Activated CD8-positive, alpha-beta T cell treated with anti-CD3 and anti-CD28 coated beads, Interleukin-2, amount 10 ng/mL, durations not matched to agents 7 days and 5 days (primary cell): ENCODE measurements at regions of chr11 and their contacts with region 1.

Region 1: DNA sequence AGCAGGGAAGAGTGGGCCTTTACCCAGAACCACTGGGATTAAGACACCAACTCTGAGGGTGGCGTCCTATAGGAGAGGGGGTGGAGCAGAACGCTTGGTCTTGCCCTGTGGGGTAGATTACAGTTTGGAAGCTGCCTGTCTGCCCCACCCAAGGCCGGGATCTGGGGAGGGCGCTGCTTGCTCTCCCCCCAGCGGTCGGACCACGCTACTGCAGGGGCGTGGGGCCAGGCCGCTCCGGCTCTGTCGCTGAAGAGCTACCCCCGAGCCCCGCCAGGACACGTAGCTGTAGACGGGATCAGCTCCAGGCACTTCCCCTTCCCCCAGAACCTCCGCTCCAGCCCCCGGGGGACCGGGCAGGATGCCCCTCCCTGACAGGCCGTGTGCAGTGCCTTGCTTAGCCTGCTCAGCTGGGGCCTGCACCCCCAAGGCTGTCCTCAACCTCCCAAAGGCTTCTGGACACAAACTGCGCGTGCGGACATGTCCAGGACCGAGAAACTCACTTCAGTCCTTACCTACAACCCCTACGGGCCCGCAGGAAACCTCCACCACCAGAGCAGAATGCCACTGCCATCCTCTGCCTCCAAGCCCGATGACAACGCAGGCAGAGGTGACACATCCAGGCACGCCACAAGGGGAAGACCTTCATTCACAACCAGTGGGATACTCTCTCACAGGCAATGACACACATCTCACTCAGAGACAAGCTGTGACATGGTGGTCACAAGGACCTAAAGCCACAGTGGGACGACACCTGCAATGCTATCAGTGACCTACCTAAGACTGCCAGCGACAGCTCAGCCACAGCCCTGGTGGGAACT is 3.6 kb downstream of the AHNAK start:
- DNase-seq: peak; percentile 81
- ATAC-seq: peak; percentile 36
- H3K4me3 Mint-ChIP-seq: peak overlapping the region; percentile 90
- H3K27ac Mint-ChIP-seq: peak overlapping the region; percentile 84
- H3K4me1 Mint-ChIP-seq: peaks cover 78% of the 10 kb centered on the region
- H3K27me3 Mint-ChIP-seq: peaks cover 7% of the 10 kb centered on the region

Region 2: GRCh38 chr11:62400760-62401159 is 142.2 kb before region 1 on chr11:
- CTCF ChIA-PET with region 1: interaction called, 69 read pairs
- POLR2A ChIA-PET with region 1: interaction called, 3 read pairs
- DNase-seq: no peak
- ATAC-seq: no peak
- H3K4me3 Mint-ChIP-seq: no peak overlapping the region
- H3K27ac Mint-ChIP-seq: no peak overlapping the region
- H3K4me1 Mint-ChIP-seq: peaks cover 51% of the 10 kb centered on the region
- H3K27me3 Mint-ChIP-seq: peaks cover 2% of the 10 kb centered on the region

Region 3: DNA sequence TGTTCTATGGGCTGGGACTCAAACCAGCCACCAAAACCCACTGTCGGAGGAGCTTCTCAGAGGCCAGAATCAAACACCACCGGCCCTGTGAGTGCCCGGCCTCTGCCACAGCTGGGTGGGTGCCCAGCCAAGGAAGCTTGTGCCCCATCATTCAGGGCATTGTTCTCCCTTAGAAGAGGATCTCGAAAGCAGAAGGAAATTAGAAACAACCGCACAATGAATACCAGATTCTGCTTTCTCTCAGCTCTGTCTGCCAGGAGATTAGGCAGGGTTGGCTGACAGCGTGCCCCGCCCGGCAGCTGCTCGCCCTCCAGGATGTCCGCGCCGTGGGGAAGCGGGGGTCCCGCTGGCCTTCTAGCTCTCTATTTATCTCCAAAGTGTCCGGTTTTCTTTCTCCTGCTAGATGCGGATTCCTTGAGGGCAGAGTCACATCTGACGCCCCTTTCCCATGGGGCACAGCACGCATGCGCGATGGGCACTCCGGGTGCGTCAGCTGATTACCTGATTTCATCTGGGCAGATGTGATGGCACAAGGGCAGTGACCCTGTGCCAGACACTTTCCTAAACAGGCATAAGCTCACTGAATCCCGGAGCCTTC is 98.6 kb before region 1 on chr11:
- CTCF ChIA-PET with region 1: interaction called, 15 read pairs
- POLR2A ChIA-PET with region 1: no interaction called
- DNase-seq: peak; percentile 32
- ATAC-seq: peak; percentile 42
- H3K4me3 Mint-ChIP-seq: peak overlapping the region; percentile 64
- H3K27ac Mint-ChIP-seq: no peak overlapping the region
- H3K4me1 Mint-ChIP-seq: peaks cover 3% of the 10 kb centered on the region
- H3K27me3 Mint-ChIP-seq: peaks cover 30% of the 10 kb centered on the region

Region 4: DNA sequence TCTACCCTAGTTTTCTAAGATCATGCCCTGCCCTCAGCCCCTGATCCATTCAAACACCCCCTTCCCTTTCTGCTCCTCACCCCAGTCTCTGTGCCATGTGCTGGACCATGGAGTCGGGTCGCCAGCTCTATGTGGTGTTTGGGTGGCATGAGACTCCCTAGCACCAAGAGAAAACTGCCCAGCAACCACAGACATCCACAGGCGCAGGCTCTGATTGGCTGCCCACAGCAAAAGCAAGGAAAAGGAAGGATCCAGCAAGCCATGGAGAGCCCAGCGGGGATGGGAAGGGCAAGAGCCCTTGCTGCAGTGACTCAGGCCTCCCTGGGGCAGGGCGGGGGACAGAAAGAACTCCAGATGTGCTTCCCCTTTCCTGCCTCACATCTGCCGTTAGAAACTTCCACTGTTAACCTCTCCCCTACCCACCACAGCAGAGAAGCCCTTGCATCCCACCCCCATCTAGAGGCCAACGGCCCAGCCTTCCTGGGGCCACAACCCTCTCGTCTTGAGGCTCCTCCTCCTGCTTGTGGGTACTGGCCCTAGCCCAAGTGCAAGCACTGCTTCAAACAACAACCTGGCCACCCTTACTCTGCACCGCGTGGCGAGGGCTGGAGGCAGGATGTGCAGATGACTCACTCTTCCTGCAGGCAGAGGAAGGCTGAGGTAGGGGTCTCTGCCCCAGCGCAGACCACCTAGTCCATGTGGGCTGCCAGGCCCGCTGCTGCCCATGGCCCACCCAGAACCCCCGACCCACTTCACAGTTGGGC is 13.3 kb after region 1 on chr11:
- CTCF ChIA-PET with region 1: interaction called, 266 read pairs
- POLR2A ChIA-PET with region 1: interaction called, 36 read pairs
- DNase-seq: peak; percentile 94
- ATAC-seq: peak; percentile 72
- H3K4me3 Mint-ChIP-seq: peak overlapping the region; percentile 66
- H3K27ac Mint-ChIP-seq: peak overlapping the region; percentile 95
- H3K4me1 Mint-ChIP-seq: peaks cover 95% of the 10 kb centered on the region
- H3K27me3 Mint-ChIP-seq: no peaks in the 10 kb centered on the region

Region 5: DNA sequence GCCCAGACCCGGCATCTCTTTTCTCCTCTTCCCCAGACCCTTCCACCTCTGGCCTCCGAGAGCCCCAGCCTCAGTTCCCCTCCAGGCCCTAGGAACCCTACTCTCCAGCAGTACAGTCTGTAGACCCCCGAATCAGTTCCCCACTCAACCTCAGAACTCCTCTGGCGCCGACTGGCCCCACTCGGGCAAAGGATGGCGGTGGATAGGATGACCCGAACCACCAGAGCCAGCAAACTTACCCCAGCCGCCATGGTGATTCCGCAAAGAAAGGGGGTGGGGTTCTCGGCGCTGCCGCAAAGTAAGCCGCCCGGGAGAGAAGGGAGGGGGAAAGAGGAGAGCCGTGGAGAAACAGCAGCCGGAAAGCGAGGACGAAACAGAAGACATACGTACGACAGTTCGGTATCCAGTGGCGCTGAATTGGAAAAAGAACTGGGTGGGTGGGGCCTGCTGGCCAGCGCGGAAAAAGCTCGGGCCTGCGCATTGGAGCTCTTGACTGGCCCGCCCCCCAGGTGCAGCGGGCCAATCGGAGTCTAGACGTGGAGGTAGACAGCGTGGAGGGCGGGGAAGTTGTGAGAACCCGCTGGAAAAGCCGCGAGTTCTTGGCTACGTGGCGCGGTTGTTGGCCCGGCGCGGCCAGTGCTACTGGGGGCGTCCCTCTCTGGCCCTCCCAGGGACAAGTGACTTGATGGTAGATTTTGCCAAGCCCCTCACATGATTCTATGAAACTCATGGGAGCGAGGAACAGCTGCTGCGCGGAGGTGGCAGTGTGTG is 30.8 kb after region 1 on chr11 and contains the start of gene EEF1G:
- CTCF ChIA-PET with region 1: interaction called, 49 read pairs
- POLR2A ChIA-PET with region 1: interaction called, 4 read pairs
- DNase-seq: peak; percentile 100
- ATAC-seq: peak; percentile 96
- H3K4me3 Mint-ChIP-seq: peak within 1 kb of the TSS; percentile 99
- H3K27ac Mint-ChIP-seq: peak within 1 kb of the TSS; percentile 97
- H3K4me1 Mint-ChIP-seq: peaks cover 53% of the 10 kb centered on the region
- H3K27me3 Mint-ChIP-seq: no peaks in the 10 kb centered on the region
- total RNA-seq, gene EEF1G: 1,058 to 1,098 TPM

Region 6: DNA sequence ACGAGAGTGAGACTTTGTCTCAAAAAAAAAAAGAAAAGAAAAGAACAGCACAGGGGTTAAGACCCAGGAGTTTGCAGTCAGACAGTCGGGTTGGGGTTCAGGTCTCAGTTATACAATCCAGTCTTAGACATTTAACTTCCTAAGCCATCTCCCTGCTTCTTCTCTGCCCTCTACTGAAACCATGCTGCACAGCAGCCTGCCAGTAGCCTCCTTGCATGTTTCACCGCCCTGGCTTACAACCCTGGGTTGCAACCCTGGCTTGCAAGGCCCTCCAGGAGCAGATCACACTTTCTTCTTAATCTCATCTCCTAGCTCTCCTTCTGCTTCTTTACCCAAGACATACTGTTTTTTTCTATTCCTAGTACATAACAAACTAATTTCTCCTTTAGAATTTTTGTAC is 84.8 kb after region 1 on chr11:
- CTCF ChIA-PET with region 1: no interaction called
- POLR2A ChIA-PET with region 1: no interaction called
- DNase-seq: no peak
- ATAC-seq: peak; percentile 24
- H3K4me3 Mint-ChIP-seq: no peak overlapping the region
- H3K27ac Mint-ChIP-seq: no peak overlapping the region
- H3K4me1 Mint-ChIP-seq: peaks cover 2% of the 10 kb centered on the region
- H3K27me3 Mint-ChIP-seq: no peaks in the 10 kb centered on the region

Region 7: DNA sequence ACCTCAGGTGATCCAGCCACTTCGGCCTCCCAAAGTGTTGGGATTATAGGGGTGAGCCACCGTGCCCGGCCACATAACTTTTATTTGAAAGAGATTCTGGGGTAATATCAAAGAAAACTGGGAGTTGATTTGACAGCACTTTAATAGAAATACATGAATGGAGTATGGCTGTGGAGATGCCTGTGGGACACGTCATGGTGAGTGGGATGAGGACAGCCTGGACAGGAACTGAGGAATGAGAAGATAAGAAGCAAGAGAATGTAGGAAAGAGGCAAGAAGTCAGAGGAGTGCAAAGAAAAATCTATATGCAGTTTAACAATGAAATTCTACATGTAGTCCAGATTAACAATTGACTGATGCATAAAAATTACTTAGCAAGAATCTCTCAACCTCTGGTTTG is 410.9 kb after region 1 on chr11:
- CTCF ChIA-PET with region 1: no interaction called
- POLR2A ChIA-PET with region 1: no interaction called
- DNase-seq: no peak
- ATAC-seq: no peak
- H3K4me3 Mint-ChIP-seq: no peak overlapping the region
- H3K27ac Mint-ChIP-seq: no peak overlapping the region
- H3K4me1 Mint-ChIP-seq: no peaks in the 10 kb centered on the region
- H3K27me3 Mint-ChIP-seq: peaks cover 15% of the 10 kb centered on the region